Activated CD4-positive, alpha-beta T cell treated with anti-CD3 and anti-CD28 coated beads, Interleukin-2, amount 10 ng/mL, durations not matched to agents 24 days and 14 days (primary cell): ENCODE measurements at regions of chr7 and their contacts with region 1.

Region 1: DNA sequence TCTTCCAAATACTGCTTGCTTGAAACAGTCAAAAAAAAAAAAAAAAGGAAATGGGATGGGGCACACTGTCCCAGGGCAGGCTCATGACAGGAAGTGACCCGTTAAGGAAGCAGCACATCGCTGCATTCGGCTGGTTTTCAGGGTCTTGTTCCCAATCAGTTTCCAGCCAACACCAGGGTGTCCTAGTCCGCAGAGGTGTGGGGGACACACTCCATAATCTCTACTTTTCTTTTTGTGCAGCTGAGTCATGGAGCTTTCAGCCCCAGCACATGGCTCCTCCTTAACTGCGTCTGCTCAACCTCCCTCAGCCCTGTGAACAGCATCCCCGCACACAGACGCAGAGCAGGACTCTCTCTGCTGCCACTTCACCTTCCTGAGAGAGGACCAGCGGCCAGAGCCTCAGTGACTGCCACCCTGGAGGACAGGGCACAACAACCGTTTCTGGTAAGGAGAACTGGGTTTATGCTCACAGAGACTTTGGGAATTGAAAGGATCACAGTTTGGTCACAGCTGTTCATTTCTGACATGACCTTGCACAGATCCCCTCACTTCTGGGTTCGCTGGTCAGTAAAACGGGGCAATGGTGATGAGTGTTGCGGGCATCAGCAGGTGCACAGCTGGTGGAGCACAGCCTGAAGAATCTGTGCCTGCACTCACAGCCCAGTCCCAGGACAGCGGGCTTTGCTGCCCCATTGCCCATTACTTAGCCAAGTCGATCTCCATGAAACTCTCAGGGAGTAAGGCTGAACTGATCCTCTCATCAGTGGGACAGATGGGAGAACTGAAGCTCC is at the start of gene GIMAP5:
- DNase-seq: peak; percentile 89
- H3K4me3 Mint-ChIP-seq: peak within 1 kb of the TSS; percentile 89
- H3K27ac Mint-ChIP-seq: peak within 1 kb of the TSS; percentile 94
- H3K4me1 Mint-ChIP-seq: peaks cover 69% of the 10 kb centered on the region
- H3K27me3 Mint-ChIP-seq: no peaks in the 10 kb centered on the region
- total RNA-seq, gene GIMAP5: 44.4 and 50.9 TPM in 2 replicates

Region 2: GRCh38 chr7:150514748-150515222 is 222.7 kb before region 1 on chr7 and contains the start of gene GIMAP7:
- intact Hi-C with region 1: loop called (anchors 1 kb)
- DNase-seq: peak; percentile 93
- H3K4me3 Mint-ChIP-seq: peak within 1 kb of the TSS; percentile 99
- H3K27ac Mint-ChIP-seq: peak within 1 kb of the TSS; percentile 99
- H3K4me1 Mint-ChIP-seq: peaks cover 54% of the 10 kb centered on the region
- H3K27me3 Mint-ChIP-seq: no peaks in the 10 kb centered on the region
- total RNA-seq, gene GIMAP7: 40.5 and 45.0 TPM in 2 replicates

Region 3: DNA sequence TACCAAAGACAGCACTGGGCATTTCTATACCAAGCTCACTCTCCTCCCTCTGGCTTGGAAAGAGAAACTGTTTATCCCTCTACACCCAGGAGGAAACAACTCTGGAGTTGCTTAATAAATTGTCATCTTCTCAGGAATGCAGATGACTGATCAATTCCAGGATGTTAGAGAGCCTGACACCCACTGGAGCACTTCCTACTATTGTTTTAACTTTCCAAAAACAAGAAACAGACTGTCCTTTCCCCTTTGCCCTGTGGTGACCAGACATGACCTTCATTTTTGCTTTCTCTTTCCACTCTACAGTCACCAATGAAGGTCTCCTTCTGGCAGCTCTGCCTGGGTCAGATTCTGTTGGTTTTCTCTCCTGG is 150.7 kb before region 1 on chr7:
- intact Hi-C with region 1: loop called (anchors 5 kb)
- DNase-seq: peak; percentile 73
- H3K4me3 Mint-ChIP-seq: peak overlapping the region; percentile 71
- H3K27ac Mint-ChIP-seq: peak overlapping the region; percentile 86
- H3K4me1 Mint-ChIP-seq: peaks cover 46% of the 10 kb centered on the region
- H3K27me3 Mint-ChIP-seq: no peaks in the 10 kb centered on the region

Region 4: DNA sequence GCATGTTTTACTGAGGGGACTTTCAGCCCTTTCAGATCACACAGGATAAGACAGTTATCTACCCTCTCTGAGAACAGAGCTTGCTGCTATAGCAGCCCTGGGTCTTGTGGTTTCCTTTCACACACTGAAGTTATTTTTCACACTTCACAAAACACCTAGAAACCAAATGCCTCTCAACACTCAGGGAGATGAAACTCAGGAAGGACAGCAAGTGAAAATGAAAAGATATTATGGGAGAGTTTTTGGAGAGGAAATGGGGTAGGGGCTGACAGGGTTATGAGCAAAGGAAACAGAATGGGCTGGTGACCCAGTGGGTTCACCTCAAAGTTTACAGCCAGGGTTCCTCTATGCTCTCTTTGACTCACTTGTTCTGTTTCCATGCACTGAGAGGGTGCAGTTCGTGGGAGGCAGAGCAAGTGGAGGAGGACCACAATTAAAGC is 69.0 kb before region 1 on chr7:
- intact Hi-C with region 1: loop called (anchors 1 kb)
- DNase-seq: peak; percentile 91
- H3K4me3 Mint-ChIP-seq: peak overlapping the region; percentile 43
- H3K27ac Mint-ChIP-seq: peak overlapping the region; percentile 93
- H3K4me1 Mint-ChIP-seq: peaks cover 69% of the 10 kb centered on the region
- H3K27me3 Mint-ChIP-seq: no peaks in the 10 kb centered on the region

Region 5: DNA sequence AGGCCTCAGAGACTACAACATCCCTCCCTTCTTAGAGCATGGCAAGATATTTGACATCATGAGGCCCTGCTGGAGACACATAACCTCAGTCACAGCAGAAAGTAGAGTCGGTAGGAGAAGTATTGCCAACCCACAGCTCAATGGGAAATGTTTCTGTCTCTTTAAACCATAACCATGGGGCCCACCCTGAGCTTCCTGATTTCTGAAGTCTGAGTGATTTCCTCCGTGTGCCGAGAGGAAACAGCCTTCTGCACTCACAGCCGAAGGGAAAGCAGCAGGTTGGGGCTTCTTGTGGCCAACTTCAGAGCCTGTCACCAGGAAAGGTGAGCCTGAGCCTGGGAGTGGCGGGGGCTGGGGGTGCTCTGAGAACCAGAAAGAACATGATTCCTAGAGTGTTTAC is 21.1 kb before region 1 on chr7 and contains the start of gene GIMAP1:
- intact Hi-C with region 1: loop called (anchors 1 kb)
- DNase-seq: peak; percentile 91
- H3K4me3 Mint-ChIP-seq: peak within 1 kb of the TSS; percentile 89
- H3K27ac Mint-ChIP-seq: peak within 1 kb of the TSS; percentile 87
- H3K4me1 Mint-ChIP-seq: peaks cover 52% of the 10 kb centered on the region
- H3K27me3 Mint-ChIP-seq: no peaks in the 10 kb centered on the region
- total RNA-seq, gene GIMAP1: 4.9 and 6.0 TPM in 2 replicates

Region 6: DNA sequence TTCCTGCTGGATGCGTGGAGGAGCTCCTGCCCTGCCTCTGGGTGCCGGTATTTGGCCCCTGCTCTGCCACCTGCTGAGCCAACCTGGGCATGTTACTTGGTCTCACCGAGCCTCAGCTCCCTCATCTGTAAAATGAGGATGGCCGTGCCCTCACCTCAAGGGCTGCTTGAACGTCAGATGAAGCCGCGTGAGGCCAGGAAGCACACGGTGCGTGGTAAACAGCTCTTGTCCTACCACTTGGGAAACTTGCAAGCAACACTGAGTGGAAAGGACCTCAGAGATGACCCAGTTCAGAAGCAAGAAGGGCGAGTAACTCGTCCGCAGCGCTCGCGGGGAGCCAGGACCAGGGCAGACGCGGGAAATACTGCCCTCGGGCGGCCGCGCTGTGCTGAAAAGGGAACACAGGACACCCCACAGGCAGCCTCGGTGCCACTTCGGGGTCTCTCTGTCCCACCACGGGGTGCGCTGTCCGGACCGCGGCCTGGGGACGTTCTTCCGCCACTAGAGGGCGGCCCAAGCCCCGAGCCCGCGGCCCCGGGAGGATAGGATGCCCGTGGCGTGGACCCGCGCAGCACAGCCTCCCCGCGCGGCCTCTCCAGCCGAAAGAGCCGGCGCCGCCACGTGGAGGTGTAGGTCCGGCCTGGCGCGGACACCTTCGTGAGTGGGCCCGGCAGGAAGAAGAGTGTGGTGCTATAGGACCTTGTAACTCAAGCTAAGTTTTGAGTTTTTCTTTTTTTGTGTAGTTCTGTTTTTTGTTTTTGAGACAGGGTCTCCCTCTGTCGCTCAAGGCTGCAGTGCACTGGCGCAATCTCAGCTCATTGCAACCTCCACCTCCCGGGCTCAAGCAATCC is 1045.4 kb after region 1 on chr7:
- intact Hi-C with region 1: no loop called
- DNase-seq: peak; percentile 89
- H3K4me3 Mint-ChIP-seq: peak overlapping the region; percentile 80
- H3K27ac Mint-ChIP-seq: peak overlapping the region; percentile 86
- H3K4me1 Mint-ChIP-seq: peaks cover 7% of the 10 kb centered on the region
- H3K27me3 Mint-ChIP-seq: no peaks in the 10 kb centered on the region